SK-N-SH (cell line): ENCODE measurements at regions of chr10 and their contacts with region 1.

Region 1: DNA sequence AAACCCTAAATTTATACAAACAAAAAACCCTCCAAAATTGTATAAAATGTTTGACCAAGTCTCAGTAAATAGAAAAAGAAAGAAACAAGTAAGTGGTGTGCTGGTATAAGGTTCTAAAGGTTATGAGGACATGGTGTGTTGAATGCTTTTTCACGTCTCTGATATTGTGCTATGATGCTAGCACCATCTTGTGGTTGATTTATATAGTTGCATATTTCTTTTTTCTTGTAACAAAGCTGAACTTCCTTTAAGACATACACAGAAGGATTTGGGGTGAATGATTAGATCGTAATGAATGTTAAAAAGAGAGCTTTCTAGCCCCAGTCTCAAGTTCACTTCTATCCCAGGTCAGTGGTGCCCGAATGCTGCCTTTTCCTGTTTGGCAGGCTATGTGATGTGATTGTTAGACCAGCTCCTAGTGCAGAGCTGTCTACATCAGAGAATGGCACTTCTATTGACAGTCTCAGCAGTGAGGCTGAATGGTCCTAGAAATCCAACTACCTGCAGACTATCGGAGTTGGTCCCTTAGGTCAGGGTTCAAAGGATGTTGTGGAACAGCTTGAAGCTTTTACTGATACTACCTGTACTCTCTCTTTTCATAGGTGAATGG is 25.0 kb downstream of the VTI1A start:
- DNase-seq: peak; percentile 48
- H3K4me3 ChIP-seq: no peak overlapping the region
- H3K27ac ChIP-seq: no peak overlapping the region
- H3K4me1 ChIP-seq: peaks cover 2 to 6% of the 10 kb centered on the region in 2 experiments; a peak in 3 of 4 replicates
- H3K27me3 ChIP-seq: no peaks in the 10 kb centered on the region
- CTCF ChIP-seq: peak; percentile 82
- EP300 ChIP-seq: no peak
- RAD21 ChIP-seq: peak; percentile 78

Region 2: DNA sequence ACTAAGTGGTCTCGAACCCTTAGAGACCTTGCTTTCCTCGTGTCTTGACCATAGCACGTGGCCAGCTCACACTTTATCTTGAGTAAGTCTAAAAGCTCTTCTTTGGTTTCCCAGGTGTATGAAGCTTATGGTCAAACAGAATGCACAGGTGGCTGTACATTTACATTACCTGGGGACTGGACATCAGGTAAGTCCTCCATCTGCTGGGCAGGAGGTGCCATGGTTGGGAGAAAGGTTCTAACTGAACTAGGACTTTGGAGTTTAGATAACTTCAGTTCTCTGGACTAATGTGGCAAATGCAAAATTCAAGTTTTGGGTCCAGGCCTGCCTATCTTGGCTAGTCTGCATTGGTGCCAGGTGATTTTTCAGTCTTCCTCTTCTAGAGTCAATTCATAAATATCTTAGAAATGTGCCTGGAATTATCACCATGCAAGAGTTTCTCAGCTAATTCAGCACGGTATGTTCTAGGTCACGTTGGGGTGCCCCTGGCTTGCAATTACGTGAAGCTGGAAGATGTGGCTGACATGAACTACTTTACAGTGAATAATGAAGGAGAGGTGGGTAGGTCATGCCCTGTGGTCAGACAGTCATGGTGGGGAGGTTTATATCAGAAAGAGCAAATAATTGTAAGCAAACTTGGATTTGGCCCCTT is 50.4 kb before region 1 on chr10:
- CTCF ChIA-PET with region 1: no interaction called
- POLR2A ChIA-PET with region 1: no interaction called
- DNase-seq: no peak
- H3K4me3 ChIP-seq: no peak overlapping the region
- H3K27ac ChIP-seq: no peak overlapping the region
- H3K4me1 ChIP-seq: no peaks in the 10 kb centered on the region
- H3K27me3 ChIP-seq: no peaks in the 10 kb centered on the region
- CTCF ChIP-seq: no peak
- EP300 ChIP-seq: no peak
- RAD21 ChIP-seq: no peak

Region 3: DNA sequence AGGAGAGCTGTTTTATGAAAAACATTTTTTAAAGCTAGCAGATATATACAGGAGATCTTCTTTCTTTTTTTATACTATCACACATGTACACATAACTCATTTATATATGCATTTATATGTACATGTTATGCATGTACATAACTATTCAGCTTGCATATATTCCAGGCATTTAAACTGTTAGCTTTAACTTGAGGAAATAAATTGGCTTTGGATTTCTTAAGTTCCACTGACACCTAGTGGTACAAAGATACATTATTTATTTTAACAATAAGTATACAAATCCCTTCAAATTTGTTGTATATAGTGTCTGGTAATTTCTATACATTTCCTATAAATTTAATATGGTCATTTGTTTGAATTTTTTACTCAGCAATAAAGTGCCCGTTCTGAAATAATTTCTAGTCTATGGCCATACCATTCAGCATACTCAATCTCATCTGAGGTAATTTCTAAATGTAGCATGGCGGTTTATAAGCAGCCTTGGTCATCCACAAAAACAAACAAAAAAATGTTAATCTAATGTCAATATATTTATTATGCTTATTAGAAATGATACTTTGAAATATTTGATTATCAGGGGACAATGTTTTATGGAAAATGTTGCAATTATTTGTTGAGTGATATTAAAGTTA is 36.9 kb before region 1 on chr10:
- CTCF ChIA-PET with region 1: interaction called, 11 read pairs
- POLR2A ChIA-PET with region 1: interaction called, 3 read pairs
- DNase-seq: no peak
- H3K4me3 ChIP-seq: no peak overlapping the region
- H3K27ac ChIP-seq: no peak overlapping the region
- H3K4me1 ChIP-seq: no peaks in the 10 kb centered on the region
- H3K27me3 ChIP-seq: no peaks in the 10 kb centered on the region
- CTCF ChIP-seq: peak; percentile 66
- EP300 ChIP-seq: no peak
- RAD21 ChIP-seq: peak; percentile 66

Region 4: GRCh38 chr10:112461029-112461887 is 10.7 kb before region 1 on chr10:
- CTCF ChIA-PET with region 1: interaction called, 24 read pairs
- POLR2A ChIA-PET with region 1: no interaction called
- DNase-seq: no peak
- H3K4me3 ChIP-seq: no peak overlapping the region
- H3K27ac ChIP-seq: peak overlapping the region in 1 of 2 experiments; percentile 70; a peak in 2 of 4 replicates
- H3K4me1 ChIP-seq: no peaks in the 10 kb centered on the region
- H3K27me3 ChIP-seq: no peaks in the 10 kb centered on the region
- CTCF ChIP-seq: no peak
- EP300 ChIP-seq: no peak
- RAD21 ChIP-seq: no peak

Region 5: GRCh38 chr10:112490545-112490944 is 18.6 kb after region 1 on chr10:
- CTCF ChIA-PET with region 1: interaction called, 14 read pairs
- POLR2A ChIA-PET with region 1: no interaction called
- DNase-seq: peak; percentile 67
- H3K4me3 ChIP-seq: no peak overlapping the region
- H3K27ac ChIP-seq: peak overlapping the region in 1 of 2 experiments; percentile 42; a peak in 1 of 4 replicates
- H3K4me1 ChIP-seq: peaks cover 12 to 15% of the 10 kb centered on the region in 2 experiments; a peak in 3 of 4 replicates
- H3K27me3 ChIP-seq: no peaks in the 10 kb centered on the region
- CTCF ChIP-seq: no peak
- EP300 ChIP-seq: peak in 1 of 2 experiments; percentile 66; a peak in 2 of 4 replicates
- RAD21 ChIP-seq: 0 out of 2 replicates have a peak, but pooled peaks have one; percentile 6

Region 6: GRCh38 chr10:112650588-112651030 is 178.6 kb after region 1 on chr10:
- CTCF ChIA-PET with region 1: no interaction called
- POLR2A ChIA-PET with region 1: no interaction called
- DNase-seq: no peak
- H3K4me3 ChIP-seq: no peak overlapping the region
- H3K27ac ChIP-seq: peak overlapping the region in 1 of 2 experiments; percentile 49; a peak in 1 of 4 replicates
- H3K4me1 ChIP-seq: no peaks in the 10 kb centered on the region; a peak in 1 of 4 replicates
- H3K27me3 ChIP-seq: no peaks in the 10 kb centered on the region
- CTCF ChIP-seq: no peak
- EP300 ChIP-seq: no peak
- RAD21 ChIP-seq: no peak

Region 7: DNA sequence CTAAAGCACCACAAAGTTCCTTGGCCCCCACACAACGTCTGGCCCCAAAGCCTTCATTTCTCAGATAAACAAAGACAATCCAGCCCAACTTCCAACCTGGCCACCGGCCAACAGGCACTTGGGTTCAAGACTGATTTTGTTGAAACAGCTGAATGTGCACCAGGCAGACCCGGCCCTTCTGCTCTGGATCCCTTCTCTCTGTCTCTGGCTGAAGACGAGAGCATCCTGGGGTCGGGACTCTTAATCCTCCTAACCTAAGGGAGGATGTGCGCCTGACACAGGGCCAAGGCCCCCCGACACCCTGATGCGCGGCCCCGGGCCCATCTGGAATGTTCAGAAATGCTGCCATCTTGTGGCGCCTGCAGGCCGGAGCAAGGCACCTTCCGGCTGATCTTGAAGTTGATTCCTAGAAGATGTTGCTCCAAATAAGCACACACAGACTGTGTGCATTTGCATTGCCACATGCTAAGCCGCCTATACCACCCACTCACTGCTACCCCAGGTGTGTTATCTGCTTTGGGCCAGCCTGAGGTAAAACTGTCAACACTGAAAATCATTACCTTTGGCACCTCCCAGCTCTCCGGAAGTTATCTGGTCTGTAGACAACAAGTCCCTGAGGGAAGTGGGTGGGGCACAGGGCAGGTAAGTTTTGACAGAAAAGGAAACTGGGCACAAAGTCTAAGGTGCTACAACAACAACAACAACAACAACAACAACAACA is 982.5 kb after region 1 on chr10:
- CTCF ChIA-PET with region 1: interaction called, 12 read pairs
- POLR2A ChIA-PET with region 1: no interaction called
- DNase-seq: peak; percentile 69
- H3K4me3 ChIP-seq: peak overlapping the region in 1 of 2 experiments; percentile 22; a peak in 2 of 4 replicates
- H3K27ac ChIP-seq: no peak overlapping the region
- H3K4me1 ChIP-seq: peaks cover 0 to 6% of the 10 kb centered on the region in 2 experiments; a peak in 1 of 4 replicates
- H3K27me3 ChIP-seq: no peaks in the 10 kb centered on the region
- CTCF ChIP-seq: peak; percentile 75
- EP300 ChIP-seq: no peak
- RAD21 ChIP-seq: peak; percentile 66